Thyroid gland (tissue), 4 donors: ENCODE measurements at regions of chr1 and their contacts with region 1.

Region 1: GRCh38 chr1:184563308-184563707 is 176.5 kb downstream of the C1orf21 start:
- DNase-seq: no peak
- H3K4me3 ChIP-seq: no peak overlapping the region
- H3K27ac ChIP-seq: peak overlapping the region in 2 of 3 donors; percentile 12 to 33
- H3K4me1 ChIP-seq: peaks cover 9 to 20% of the 10 kb centered on the region in 2 donors
- H3K27me3 ChIP-seq: no peaks in the 10 kb centered on the region
- CTCF ChIP-seq: peak in 5 of 6 experiments; percentile 3 to 68 (median 60)
- POLR2A ChIP-seq: no peak

Region 2: GRCh38 chr1:184399192-184399847 is 164.0 kb before region 1 on chr1:
- intact Hi-C with region 1: loop called (anchors 10 kb)
- DNase-seq: no peak
- H3K4me3 ChIP-seq: no peak overlapping the region
- H3K27ac ChIP-seq: no peak overlapping the region
- H3K4me1 ChIP-seq: no peaks in the 10 kb centered on the region
- H3K27me3 ChIP-seq: no peaks in the 10 kb centered on the region
- CTCF ChIP-seq: no peak
- POLR2A ChIP-seq: no peak

Region 3: GRCh38 chr1:184449916-184450315 is 113.4 kb before region 1 on chr1:
- intact Hi-C with region 1: no loop called
- DNase-seq: no peak
- H3K4me3 ChIP-seq: no peak overlapping the region
- H3K27ac ChIP-seq: no peak overlapping the region
- H3K4me1 ChIP-seq: no peaks in the 10 kb centered on the region
- H3K27me3 ChIP-seq: no peaks in the 10 kb centered on the region
- CTCF ChIP-seq: no peak
- POLR2A ChIP-seq: no peak

Region 4: GRCh38 chr1:184610876-184611595 is 47.7 kb after region 1 on chr1:
- intact Hi-C with region 1: no loop called
- DNase-seq: no peak
- H3K4me3 ChIP-seq: no peak overlapping the region
- H3K27ac ChIP-seq: peak overlapping the region; percentile 4 to 49 (median 19)
- H3K4me1 ChIP-seq: peaks cover 2 to 12% of the 10 kb centered on the region in 2 donors
- H3K27me3 ChIP-seq: no peaks in the 10 kb centered on the region
- CTCF ChIP-seq: no peak
- POLR2A ChIP-seq: no peak